Dendritic cell treated with granulocyte-macrophage colony-stimulating factor and Interleukin-4, amounts not matched to agents 40 ng/mL and 50 ng/mL, for 4 days (primary cell): ENCODE measurements at regions of chr2 and their contacts with region 1.

Region 1: DNA sequence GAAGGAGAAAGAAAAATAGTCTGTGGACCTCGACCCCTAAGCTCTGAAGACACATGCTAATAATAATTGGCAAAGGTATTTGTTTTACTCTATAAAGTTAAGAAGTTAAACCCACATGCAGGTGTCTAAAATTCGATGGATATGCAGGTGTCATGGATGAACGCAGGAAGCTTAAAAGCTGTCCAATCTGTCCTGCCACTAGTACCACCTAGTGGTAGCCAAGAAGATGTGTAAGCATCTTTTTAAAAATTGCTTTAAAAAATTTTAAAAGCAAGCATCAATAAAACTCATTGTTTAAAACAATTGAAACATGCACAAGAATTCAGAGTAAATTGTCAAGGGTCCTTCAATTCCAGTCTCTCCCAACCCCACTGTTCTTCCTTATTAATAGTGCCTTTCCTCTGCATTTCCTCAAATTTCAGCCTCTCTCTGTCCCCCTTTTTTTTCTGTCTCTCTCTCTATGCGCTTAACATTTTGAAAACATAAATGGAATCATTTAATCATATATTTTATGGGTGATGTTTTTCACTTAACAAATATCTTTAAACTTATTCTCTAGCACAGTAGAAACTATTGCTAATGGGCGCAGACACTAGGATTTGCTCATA is 30.6 kb upstream of the PPP3R1 start:
- H3K4me3 Mint-ChIP-seq: no peak overlapping the region
- H3K27ac Mint-ChIP-seq: peak overlapping the region; percentile 11
- H3K4me1 Mint-ChIP-seq: peaks cover 18% of the 10 kb centered on the region
- H3K27me3 Mint-ChIP-seq: no peaks in the 10 kb centered on the region

Region 2: GRCh38 chr2:67268806-67269205 is 1014.1 kb before region 1 on chr2:
- intact Hi-C with region 1: no loop called
- H3K4me3 Mint-ChIP-seq: no peak overlapping the region
- H3K27ac Mint-ChIP-seq: no peak overlapping the region
- H3K4me1 Mint-ChIP-seq: no peaks in the 10 kb centered on the region
- H3K27me3 Mint-ChIP-seq: no peaks in the 10 kb centered on the region

Region 3: GRCh38 chr2:67585400-67585799 is 697.5 kb before region 1 on chr2:
- intact Hi-C with region 1: no loop called
- H3K4me3 Mint-ChIP-seq: no peak overlapping the region
- H3K27ac Mint-ChIP-seq: no peak overlapping the region
- H3K4me1 Mint-ChIP-seq: no peaks in the 10 kb centered on the region
- H3K27me3 Mint-ChIP-seq: no peaks in the 10 kb centered on the region

Region 4: DNA sequence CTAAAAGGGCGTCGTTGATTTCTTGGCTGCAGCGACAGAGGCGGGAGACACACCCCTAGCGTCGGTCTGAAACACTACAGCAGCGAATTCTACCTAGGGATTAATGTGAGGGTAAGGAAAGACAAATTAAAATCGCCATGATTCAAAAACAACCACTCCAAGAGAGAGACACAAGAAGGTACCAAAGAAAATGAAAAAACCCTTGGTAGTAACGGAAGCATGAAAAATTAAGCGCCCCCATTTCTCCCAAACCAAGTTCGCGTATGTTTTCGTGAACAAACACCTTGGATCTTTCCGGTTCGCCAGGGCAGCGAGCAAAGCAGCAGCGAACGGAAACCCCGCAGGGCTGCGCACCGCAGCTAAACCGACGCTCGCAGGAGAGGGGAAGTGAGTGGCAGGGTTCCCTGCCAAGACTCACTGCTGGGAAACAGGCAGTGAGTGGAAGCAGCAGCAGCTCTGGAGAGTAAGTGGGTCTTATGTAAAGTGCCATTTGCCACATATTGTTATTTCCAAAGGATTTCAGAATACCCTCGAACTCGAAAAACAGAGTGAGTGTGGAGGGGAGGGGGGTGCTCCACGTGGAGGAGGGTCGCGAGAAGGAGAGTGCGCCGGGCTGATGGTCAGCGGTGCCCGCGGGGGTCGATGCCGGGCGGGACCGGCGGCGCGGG is 31.6 kb before region 1 on chr2:
- intact Hi-C with region 1: loop called (anchors 5 kb)
- H3K4me3 Mint-ChIP-seq: peak overlapping the region; percentile 94
- H3K27ac Mint-ChIP-seq: peak overlapping the region; percentile 97
- H3K4me1 Mint-ChIP-seq: peaks cover 30% of the 10 kb centered on the region
- H3K27me3 Mint-ChIP-seq: no peaks in the 10 kb centered on the region